Activated T-helper 2 cell treated with anti-CD3 and anti-CD28 coated beads, Interferon-gamma antibody, Interleukin-2, Interleukin-4, amounts not matched to agents 10 μg/mL and 5 μg/mL and 100 μg/mL, durations not matched to agents 14 hours and 24 hours and 36 hours (primary cell): ENCODE measurements at regions of chr11 and their contacts with region 1.

Region 1: GRCh38 chr11:34161812-34162499 is 56.5 kb downstream of the NAT10 start:
- DNase-seq: peak; percentile 22
- H3K4me3 Mint-ChIP-seq: no peak overlapping the region
- H3K27ac Mint-ChIP-seq: peak overlapping the region; percentile 60
- H3K4me1 Mint-ChIP-seq: peaks cover 17% of the 10 kb centered on the region
- H3K27me3 Mint-ChIP-seq: no peaks in the 10 kb centered on the region

Region 2: GRCh38 chr11:33463059-33463458 is 698.9 kb before region 1 on chr11:
- intact Hi-C with region 1: no loop called
- DNase-seq: no peak
- H3K4me3 Mint-ChIP-seq: no peak overlapping the region
- H3K27ac Mint-ChIP-seq: no peak overlapping the region
- H3K4me1 Mint-ChIP-seq: no peaks in the 10 kb centered on the region
- H3K27me3 Mint-ChIP-seq: no peaks in the 10 kb centered on the region

Region 3: GRCh38 chr11:34174412-34175041 is 12.6 kb after region 1 on chr11:
- intact Hi-C with region 1: no loop called
- DNase-seq: peak; percentile 72
- H3K4me3 Mint-ChIP-seq: peak overlapping the region; percentile 62
- H3K27ac Mint-ChIP-seq: peak overlapping the region; percentile 49
- H3K4me1 Mint-ChIP-seq: peaks cover 46% of the 10 kb centered on the region
- H3K27me3 Mint-ChIP-seq: no peaks in the 10 kb centered on the region

Region 4: DNA sequence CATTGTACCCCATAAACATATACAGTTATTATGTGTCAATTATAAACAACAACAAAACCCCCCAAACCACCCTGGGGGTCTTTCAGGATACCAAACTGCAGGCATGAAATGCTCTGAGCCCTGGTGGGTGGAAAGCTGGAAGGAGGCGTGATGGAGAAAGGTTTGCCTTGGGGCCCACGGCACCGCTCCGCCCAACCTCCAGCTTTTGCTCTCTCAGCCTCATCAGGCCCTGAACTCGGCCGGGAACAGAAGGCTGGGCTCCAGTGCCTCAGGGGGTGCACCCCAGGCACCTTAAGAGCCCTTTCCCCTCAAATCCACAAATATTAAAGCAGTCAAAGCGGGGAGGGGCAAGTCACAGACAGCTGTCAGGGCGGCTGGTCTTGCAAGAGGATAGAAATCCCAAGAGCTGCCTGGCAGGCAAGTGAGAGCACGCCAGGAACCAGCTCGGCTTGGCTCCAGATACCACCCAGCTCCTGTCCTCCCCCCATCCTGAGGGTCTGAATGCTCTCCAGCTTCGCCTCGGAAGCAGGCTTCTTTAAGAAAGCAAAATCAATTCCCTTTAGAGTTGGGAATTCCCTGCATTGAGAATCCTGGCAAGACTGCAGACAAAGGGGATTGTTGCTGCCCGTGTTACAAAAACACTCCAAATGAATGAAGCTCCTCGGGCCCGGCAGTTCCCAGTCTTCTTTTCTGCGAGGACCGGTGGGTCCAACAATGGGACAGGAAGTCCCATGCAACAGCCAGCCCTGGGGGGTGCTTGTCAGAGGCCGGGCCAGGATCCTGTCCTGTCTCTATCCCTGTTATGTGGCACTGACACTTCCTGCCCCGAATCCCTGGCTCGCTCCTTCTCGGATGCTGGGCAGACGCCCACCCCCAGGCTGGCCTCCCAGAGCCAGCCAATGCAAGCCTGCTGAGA is 24.2 kb after region 1 on chr11:
- intact Hi-C with region 1: no loop called
- DNase-seq: no peak
- H3K4me3 Mint-ChIP-seq: no peak overlapping the region
- H3K27ac Mint-ChIP-seq: no peak overlapping the region
- H3K4me1 Mint-ChIP-seq: peaks cover 19% of the 10 kb centered on the region
- H3K27me3 Mint-ChIP-seq: peaks cover 3% of the 10 kb centered on the region

Region 5: DNA sequence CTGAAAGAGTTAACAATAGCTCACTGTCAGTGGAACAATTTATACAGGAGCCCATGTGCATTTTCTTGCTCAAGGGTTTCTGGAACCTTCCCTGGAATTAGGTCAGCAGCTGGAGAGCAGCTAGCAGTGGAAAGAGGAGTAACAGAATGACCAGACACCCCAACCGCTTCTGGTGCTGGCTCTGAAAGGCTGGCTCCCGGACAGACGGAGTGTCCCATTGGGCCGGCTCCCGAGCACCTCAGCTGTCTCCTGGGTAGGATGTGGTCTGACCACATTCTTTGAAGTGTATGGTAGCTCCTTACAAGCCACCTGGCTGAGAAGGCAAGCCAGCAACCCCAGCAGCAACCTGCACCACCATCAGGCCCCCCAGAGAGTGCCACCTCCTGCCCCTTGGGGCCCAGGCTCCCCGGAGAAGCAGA is 151.2 kb after region 1 on chr11:
- intact Hi-C with region 1: no loop called
- DNase-seq: peak; percentile 22
- H3K4me3 Mint-ChIP-seq: no peak overlapping the region
- H3K27ac Mint-ChIP-seq: no peak overlapping the region
- H3K4me1 Mint-ChIP-seq: peaks cover 39% of the 10 kb centered on the region
- H3K27me3 Mint-ChIP-seq: no peaks in the 10 kb centered on the region

Region 6: DNA sequence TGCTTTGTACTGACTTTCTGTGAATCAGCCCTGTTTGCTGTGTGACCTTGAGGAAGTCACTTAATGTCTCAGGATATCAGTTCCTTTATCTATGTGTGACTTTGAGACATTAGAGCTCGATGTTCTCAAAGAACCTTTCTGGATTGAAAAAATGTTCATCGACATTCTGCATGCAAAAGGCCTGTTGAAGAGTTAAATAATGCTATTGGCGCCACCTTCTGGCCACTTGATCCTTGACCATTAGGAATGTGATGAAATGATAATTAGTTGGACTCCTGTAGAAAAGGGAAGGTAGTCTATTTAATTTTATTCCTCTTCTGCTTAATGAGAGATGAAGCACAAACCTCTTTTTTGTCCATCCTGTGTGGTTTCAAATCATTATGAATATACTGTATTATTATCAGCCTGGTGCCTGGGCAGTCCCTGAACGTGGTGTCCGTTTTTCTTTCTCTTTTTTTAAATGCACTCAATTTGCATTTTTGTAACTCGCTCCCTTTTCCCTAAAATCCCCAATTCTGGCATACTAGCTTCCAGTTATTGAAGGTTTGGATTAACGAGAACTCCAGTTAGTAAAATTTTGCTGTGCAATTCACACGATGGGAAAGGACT is 331.0 kb after region 1 on chr11:
- intact Hi-C with region 1: loop called (anchors 10 kb)
- DNase-seq: no peak
- H3K4me3 Mint-ChIP-seq: no peak overlapping the region
- H3K27ac Mint-ChIP-seq: no peak overlapping the region
- H3K4me1 Mint-ChIP-seq: no peaks in the 10 kb centered on the region
- H3K27me3 Mint-ChIP-seq: peaks cover 6% of the 10 kb centered on the region